IMR-90 (cell line): ENCODE measurements at regions of chrX and their contacts with region 1.

Region 1: DNA sequence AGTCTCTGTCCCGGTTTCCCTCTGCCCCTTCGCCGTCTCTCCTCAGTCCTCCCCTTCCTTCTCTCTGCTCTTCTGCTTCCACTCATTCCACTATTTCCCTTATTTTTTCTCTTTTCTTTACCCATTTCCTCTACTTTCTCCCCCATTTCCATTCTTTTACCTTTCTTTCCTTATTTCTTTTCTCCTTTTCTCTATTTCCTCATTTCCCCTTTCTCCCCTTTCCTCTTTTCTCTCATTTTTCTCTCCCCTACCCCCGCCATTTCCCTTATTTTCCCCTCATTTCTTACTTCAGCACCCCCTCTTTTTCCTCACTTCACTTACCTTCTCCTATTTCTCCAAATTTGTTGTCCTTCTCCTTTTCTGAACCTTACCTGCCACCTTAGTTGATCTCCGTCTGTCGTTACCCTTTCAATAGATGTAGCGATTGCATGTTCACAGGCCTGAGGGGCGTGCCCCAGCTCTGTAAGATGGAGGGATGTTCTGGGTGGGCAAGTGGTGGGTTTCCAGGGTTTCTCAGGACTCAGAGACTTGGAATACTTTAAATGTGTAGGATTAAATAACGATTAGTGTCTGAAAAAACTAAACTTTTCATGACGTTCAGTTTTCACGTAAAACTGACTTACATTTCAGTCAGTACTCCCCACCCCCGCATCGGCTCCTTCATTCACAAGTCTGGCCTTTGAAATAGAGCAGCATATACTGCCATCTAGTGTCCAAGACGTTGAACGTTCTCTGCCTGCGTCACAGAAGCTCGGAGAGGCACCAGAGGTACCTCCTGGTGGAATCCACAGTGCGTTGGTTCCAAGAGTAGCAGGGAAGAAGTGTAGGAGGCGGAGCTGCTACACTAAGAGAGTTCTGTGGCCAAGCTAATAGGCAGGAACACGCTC is 641 bp upstream of the NCBP2L start:
- DNase-seq: peak; percentile 87
- ATAC-seq: peak; percentile 88
- H3K4me3 ChIP-seq: peak overlapping the region; percentile 14; the same call in 1 of the 2 replicates
- H3K27ac ChIP-seq: no peak overlapping the region
- H3K4me1 ChIP-seq: no peaks in the 10 kb centered on the region
- H3K27me3 ChIP-seq: peaks cover 31% of the 10 kb centered on the region
- CTCF ChIP-seq: peak; percentile 80
- POLR2A ChIP-seq: no peak
- RAD21 ChIP-seq: peak; percentile 82

Region 2: DNA sequence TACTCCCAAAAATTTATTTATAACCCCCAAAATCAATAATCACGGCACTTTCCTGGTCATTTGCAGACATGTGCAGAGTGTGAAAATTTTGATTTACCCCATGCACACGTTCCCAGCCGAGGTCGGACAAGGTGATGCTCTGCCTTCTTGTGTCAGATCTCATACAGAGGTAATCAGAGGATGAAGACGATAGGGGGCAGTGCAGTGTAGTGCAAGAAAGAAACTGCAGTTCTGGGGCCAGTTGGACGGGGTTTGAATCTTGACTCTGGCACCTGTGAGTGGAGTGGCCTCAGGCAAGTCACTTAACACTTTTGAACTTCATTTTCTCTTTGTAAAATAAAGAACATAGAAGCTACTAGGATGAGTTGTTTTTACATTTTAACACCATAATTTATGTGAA is 239.1 kb before region 1 on chrX:
- CTCF ChIA-PET with region 1: interaction called, 3 read pairs
- POLR2A ChIA-PET with region 1: no interaction called
- dilution Hi-C with region 1: no loop called
- in situ Hi-C with region 1: no loop called
- intact Hi-C with region 1: loop called (anchors 1 kb)
- DNase-seq: peak; percentile 50
- ATAC-seq: peak; percentile 63
- H3K4me3 ChIP-seq: no peak overlapping the region
- H3K27ac ChIP-seq: no peak overlapping the region
- H3K4me1 ChIP-seq: no peaks in the 10 kb centered on the region
- H3K27me3 ChIP-seq: peaks cover 7% of the 10 kb centered on the region
- CTCF ChIP-seq: peak; percentile 59
- POLR2A ChIP-seq: no peak
- RAD21 ChIP-seq: peak; percentile 76

Region 3: DNA sequence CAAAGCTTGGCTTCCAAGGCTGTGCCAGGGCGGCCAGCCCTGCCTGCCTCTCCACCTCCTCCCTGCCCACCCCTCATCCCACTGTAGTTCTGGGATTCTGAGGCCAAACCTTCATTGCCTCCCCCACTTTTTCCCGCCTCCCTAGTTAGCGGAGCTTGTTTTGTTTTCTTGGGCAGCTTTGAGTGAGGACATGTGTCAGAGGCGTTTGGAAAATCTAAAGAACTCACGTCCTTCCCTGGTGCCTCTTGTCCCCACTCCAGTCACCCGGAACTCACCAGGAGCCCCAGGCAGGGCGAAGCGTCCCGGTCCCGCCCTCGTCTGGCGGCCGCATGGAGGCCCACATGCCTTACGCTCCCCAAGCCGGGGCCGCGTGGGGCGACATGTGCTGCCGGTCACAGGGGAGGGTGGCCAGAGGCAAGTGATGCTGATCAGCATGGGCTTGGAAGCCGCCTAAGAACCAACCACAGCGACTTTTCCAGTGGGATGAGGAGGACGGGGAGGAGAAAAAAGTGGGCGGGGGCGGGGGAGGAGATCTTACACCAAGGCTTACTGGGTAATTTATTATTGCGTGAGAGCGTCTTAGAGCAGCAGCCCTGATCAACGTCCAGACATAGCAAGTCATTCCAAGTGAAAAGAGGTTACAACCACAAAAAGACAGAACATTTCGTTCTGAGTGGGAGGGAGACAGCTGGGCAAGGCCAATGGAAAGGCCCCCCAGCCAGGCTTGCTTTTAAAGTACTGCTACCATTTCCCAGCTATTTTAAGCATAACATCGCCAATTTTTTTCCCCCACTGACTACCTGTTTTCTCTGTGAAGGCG is 100.1 kb before region 1 on chrX:
- CTCF ChIA-PET with region 1: no interaction called
- POLR2A ChIA-PET with region 1: no interaction called
- dilution Hi-C with region 1: no loop called
- in situ Hi-C with region 1: no loop called
- intact Hi-C with region 1: loop called (anchors 5 kb)
- DNase-seq: peak; percentile 84
- ATAC-seq: peak; percentile 77
- H3K4me3 ChIP-seq: peak overlapping the region; percentile 42
- H3K27ac ChIP-seq: peak overlapping the region; percentile 23; the same call in 1 of the 2 replicates
- H3K4me1 ChIP-seq: 0 out of 2 replicates have a peak, but pooled peaks cover 1% of the 10 kb centered on the region
- H3K27me3 ChIP-seq: peaks cover 19% of the 10 kb centered on the region
- CTCF ChIP-seq: no peak
- POLR2A ChIP-seq: 0 out of 2 replicates have a peak, but pooled peaks have one; percentile 17
- RAD21 ChIP-seq: no peak